Activated CD8-positive, alpha-beta T cell treated with anti-CD3 and anti-CD28 coated beads, Interleukin-2, amount 10 ng/mL, durations not matched to agents 7 days and 5 days (primary cell): ENCODE measurements at regions of chr19 and their contacts with region 1.

Region 1: GRCh38 chr19:35154525-35155406 is at the start of gene FXYD5:
- DNase-seq: peak; percentile 77
- ATAC-seq: peak; percentile 77
- H3K4me3 Mint-ChIP-seq: peak within 1 kb of the TSS; percentile 97
- H3K27ac Mint-ChIP-seq: peak within 1 kb of the TSS; percentile 96
- H3K4me1 Mint-ChIP-seq: peaks cover 51% of the 10 kb centered on the region
- H3K27me3 Mint-ChIP-seq: peaks cover 7% of the 10 kb centered on the region
- total RNA-seq, gene FXYD5: 338 to 384 TPM

Region 2: GRCh38 chr19:35168207-35168606 is 13.4 kb after region 1 on chr19:
- CTCF ChIA-PET with region 1: interaction called, 7 read pairs
- POLR2A ChIA-PET with region 1: interaction called, 18 read pairs
- DNase-seq: no peak
- ATAC-seq: no peak
- H3K4me3 Mint-ChIP-seq: no peak overlapping the region
- H3K27ac Mint-ChIP-seq: peak overlapping the region; percentile 89
- H3K4me1 Mint-ChIP-seq: peaks cover 57% of the 10 kb centered on the region
- H3K27me3 Mint-ChIP-seq: no peaks in the 10 kb centered on the region

Region 3: GRCh38 chr19:35204799-35205732 is 50.3 kb after region 1 on chr19:
- CTCF ChIA-PET with region 1: interaction called, 9 read pairs
- POLR2A ChIA-PET with region 1: interaction called, 18 read pairs
- DNase-seq: peak; percentile 36
- ATAC-seq: no peak
- H3K4me3 Mint-ChIP-seq: peak overlapping the region; percentile 50
- H3K27ac Mint-ChIP-seq: peak overlapping the region; percentile 99
- H3K4me1 Mint-ChIP-seq: peaks cover 85% of the 10 kb centered on the region
- H3K27me3 Mint-ChIP-seq: no peaks in the 10 kb centered on the region

Region 4: GRCh38 chr19:35213663-35214632 is 59.2 kb after region 1 on chr19:
- CTCF ChIA-PET with region 1: interaction called, 9 read pairs
- POLR2A ChIA-PET with region 1: interaction called, 18 read pairs
- DNase-seq: peak; percentile 82
- ATAC-seq: peak; percentile 34
- H3K4me3 Mint-ChIP-seq: peak overlapping the region; percentile 22
- H3K27ac Mint-ChIP-seq: peak overlapping the region; percentile 95
- H3K4me1 Mint-ChIP-seq: peaks cover 77% of the 10 kb centered on the region
- H3K27me3 Mint-ChIP-seq: no peaks in the 10 kb centered on the region